ENCODE measurements at regions of chr1 and their contacts with region 1.

Region 1: GRCh38 chr1:1906185-1907097 is 8.6 kb upstream of the CALML6 start:
- DNase-seq: peak; percentile 89 to 92 (median 91)
- ATAC-seq: peak; percentile 67 to 88 (median 75)
- H3K4me3 ChIP-seq: no peak overlapping the region
- H3K27ac ChIP-seq: peak overlapping the region in 10 of 12 donors; percentile 24 to 84 (median 58)
- H3K4me1 ChIP-seq: peaks cover 0 to 36% (median 20%) of the 10 kb centered on the region in 12 donors
- H3K27me3 ChIP-seq: no peaks in the 10 kb centered on the region
- CTCF ChIP-seq: peak; percentile 89 to 96 (median 92)
- POLR2A ChIP-seq: no peak

Region 2: DNA sequence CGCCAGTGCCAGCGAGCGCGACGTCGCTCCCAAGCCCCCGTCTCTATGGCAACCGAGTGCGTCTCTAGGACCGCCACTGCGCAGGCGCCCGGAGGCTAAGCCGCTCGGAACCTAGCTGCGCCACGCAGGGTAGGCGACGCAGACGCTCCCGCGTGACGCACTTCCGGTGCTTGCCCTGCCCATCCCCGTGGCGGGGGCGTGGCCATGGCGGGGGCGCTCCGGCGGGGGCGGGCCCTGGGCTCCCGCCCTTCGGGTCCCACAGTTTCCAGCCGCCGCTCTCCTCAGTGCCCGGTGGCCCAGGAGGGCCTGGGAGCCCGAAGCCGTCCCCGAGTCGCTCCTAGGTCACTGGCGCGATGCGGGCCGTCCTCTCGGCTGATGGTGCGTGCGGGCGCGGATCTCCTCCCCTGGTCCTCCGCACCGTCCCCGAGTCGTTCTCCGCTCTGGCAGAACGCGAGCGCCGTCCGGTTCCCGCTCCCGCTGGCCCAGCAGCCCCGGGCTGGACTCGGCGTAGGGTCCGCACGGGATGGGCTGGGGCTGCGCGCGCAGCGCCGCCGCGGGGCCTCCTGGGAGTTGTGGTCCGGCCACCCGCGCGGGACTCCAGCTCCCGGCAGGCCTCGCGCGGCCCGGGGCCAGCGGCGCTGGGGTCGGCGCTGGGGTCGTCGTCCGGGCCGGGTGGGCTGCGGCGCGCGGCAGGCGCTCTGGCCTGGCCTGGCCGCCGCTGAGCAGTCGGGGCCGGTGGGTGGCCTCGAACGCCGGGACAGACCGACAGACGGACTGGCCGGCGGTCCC is 291.0 kb before region 1 on chr1 and contains the start of gene MIB2:
- intact Hi-C with region 1: no loop called
- DNase-seq: peak; percentile 96 to 99 (median 97)
- ATAC-seq: peak; percentile 91 to 95 (median 94)
- H3K4me3 ChIP-seq: peak within 1 kb of the TSS; percentile 81 to 100 (median 97)
- H3K27ac ChIP-seq: peak within 1 kb of the TSS; percentile 99 to 100 (median 100)
- H3K4me1 ChIP-seq: peaks cover 4 to 49% (median 32%) of the 10 kb centered on the region in 12 donors
- H3K27me3 ChIP-seq: no peaks in the 10 kb centered on the region
- CTCF ChIP-seq: no peak
- POLR2A ChIP-seq: peak in 1 of 2 donors; percentile 84
- total RNA-seq, gene MIB2: 59.2 to 114 (median 76.3) TPM

Region 3: GRCh38 chr1:1758692-1759455 is 147.6 kb before region 1 on chr1:
- intact Hi-C with region 1: loop called in 1 of 10 experiments (anchors 10 kb)
- DNase-seq: peak; percentile 66 to 81 (median 71)
- ATAC-seq: peak; percentile 57 to 90 (median 60)
- H3K4me3 ChIP-seq: peak overlapping the region in 1 of 12 donors; percentile 1
- H3K27ac ChIP-seq: peak overlapping the region in 9 of 12 donors; percentile 2 to 70 (median 47)
- H3K4me1 ChIP-seq: peaks cover 0 to 19% (median 10%) of the 10 kb centered on the region in 12 donors
- H3K27me3 ChIP-seq: no peaks in the 10 kb centered on the region
- CTCF ChIP-seq: no peak
- POLR2A ChIP-seq: no peak

Region 4: GRCh38 chr1:1796466-1796865 is 110.0 kb before region 1 on chr1:
- intact Hi-C with region 1: loop called in 2 of 10 experiments (anchors 5 kb)
- DNase-seq: peak in 1 of 5 donors; percentile 30
- ATAC-seq: no peak
- H3K4me3 ChIP-seq: no peak overlapping the region
- H3K27ac ChIP-seq: no peak overlapping the region
- H3K4me1 ChIP-seq: peaks cover 0 to 18% (median 10%) of the 10 kb centered on the region in 12 donors
- H3K27me3 ChIP-seq: no peaks in the 10 kb centered on the region
- CTCF ChIP-seq: peak in 6 of 12 donors; percentile 6 to 24 (median 18)
- POLR2A ChIP-seq: no peak

Region 5: GRCh38 chr1:1890506-1891348 is 15.7 kb before region 1 on chr1 and contains the start of gene GNB1:
- intact Hi-C with region 1: loop called in 1 of 10 experiments (anchors 1 kb)
- DNase-seq: peak; percentile 89 to 95 (median 90)
- ATAC-seq: peak; percentile 48 to 87 (median 86)
- H3K4me3 ChIP-seq: peak within 1 kb of the TSS; percentile 87 to 100 (median 96)
- H3K27ac ChIP-seq: peak within 1 kb of the TSS; percentile 90 to 98 (median 96)
- H3K4me1 ChIP-seq: peaks cover 0 to 74% (median 58%) of the 10 kb centered on the region in 12 donors
- H3K27me3 ChIP-seq: peaks cover 0 to 4% (median 0%) of the 10 kb centered on the region in 9 donors
- CTCF ChIP-seq: no peak
- POLR2A ChIP-seq: peak in 1 of 2 donors; percentile 68
- total RNA-seq, gene GNB1: 83.8 to 275 (median 172) TPM

Region 6: DNA sequence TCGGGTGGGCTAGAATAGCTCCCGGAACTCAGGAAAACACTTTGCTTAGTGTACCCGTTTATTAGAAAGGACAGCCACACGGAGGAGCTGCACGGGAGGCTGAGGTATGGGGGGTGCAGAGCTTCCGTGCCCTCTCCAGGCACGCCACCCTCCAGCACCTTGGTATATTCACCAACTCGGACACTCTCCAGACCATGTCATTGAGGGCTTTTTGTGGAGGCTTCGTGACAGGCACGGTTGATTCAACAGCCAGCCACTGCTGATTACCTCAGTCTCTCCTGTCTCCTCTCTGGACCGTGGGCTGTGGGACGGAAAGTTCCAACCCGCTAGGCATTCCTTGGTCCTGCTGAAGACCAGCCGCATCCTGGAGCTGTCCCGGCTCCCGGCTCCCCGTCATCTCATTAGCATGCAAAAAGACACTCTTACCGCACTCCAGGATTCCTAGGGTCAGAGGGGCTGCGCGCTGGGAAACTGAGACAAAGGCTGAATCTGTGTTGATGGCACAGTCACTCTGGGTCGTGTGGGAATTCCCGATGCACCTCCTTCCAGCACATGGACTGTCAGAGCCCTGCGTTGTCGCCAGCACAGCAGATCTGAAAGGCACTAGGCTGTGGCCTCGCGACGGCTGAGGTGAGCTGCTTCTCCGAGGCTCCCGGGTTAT is 209.4 kb after region 1 on chr1:
- intact Hi-C with region 1: no loop called
- DNase-seq: peak in 2 of 5 donors; percentile 13 to 40
- ATAC-seq: no peak
- H3K4me3 ChIP-seq: no peak overlapping the region
- H3K27ac ChIP-seq: no peak overlapping the region
- H3K4me1 ChIP-seq: no peaks in the 10 kb centered on the region
- H3K27me3 ChIP-seq: no peaks in the 10 kb centered on the region
- CTCF ChIP-seq: no peak
- POLR2A ChIP-seq: no peak